ENCODE measurements at regions of chr17 and their contacts with region 1.

Region 1: GRCh38 chr17:6927290-6928126 is 68.3 kb upstream of the ALOX12 start:
- DNase-seq: peak; percentile 28
- H3K4me3 ChIP-seq: no peak overlapping the region
- H3K27ac ChIP-seq: peak overlapping the region; percentile 34
- H3K4me1 ChIP-seq: peaks cover 14% of the 10 kb centered on the region
- H3K27me3 ChIP-seq: no peaks in the 10 kb centered on the region
- CTCF ChIP-seq: no peak

Region 2: DNA sequence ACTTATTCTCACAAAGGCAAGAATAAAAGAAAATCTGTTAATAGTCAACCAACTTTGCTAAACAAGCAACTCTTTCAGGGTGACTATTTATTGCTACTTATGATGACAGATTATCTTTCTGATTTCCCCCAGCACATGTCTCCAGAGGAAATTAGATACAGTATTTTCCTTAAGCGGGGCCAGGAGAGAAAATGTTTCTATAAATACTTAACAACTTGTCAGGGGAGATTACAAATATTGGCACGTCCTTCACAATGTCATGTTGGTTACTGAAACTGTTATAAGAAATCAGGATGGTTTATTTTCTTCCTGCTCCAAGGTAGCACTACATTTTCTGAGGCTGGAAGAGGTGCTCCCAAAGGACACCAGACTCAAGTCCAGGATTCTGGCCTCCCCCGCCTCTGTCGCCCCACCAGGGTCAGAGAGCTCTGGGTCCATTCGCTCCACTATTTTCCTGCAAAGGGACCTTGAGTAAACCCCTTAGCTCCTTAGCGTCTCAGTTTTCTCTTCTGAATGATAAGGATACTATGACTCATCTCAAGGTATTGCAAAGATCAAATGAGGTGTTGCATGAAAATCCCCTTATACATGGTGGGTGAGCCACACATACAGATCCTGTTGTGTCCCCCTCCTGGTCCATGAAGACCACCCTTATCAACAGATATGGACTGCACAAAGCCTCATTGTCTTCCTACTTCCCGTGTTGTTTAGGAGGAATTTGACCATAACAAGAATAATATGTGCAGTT is 1062.4 kb before region 1 on chr17:
- CTCF ChIA-PET with region 1: no interaction called
- POLR2A ChIA-PET with region 1: no interaction called
- intact Hi-C with region 1: no loop called
- DNase-seq: no peak
- H3K4me3 ChIP-seq: no peak overlapping the region
- H3K27ac ChIP-seq: no peak overlapping the region
- H3K4me1 ChIP-seq: no peaks in the 10 kb centered on the region
- H3K27me3 ChIP-seq: peaks cover 28% of the 10 kb centered on the region
- CTCF ChIP-seq: no peak

Region 3: DNA sequence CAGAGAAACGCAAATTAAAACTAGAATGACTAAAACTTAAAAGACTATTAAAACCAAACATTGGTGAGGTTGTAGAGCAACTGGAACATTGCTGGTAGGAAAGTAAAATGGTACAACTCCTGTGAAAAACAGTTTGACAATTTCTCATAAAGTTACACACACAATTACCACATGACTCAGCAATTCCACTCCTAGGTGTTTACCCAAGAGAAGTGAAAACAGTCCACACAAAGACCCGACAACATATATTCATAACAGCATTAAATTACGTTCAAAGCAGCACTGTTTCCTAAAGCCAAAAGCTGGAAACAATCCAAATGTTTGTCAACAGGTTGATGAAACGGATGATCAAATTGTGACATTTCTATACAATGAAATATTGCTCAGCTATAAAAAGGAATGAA is 41.8 kb after region 1 on chr17:
- CTCF ChIA-PET with region 1: no interaction called
- POLR2A ChIA-PET with region 1: interaction called, 11 read pairs
- intact Hi-C with region 1: no loop called
- DNase-seq: no peak
- H3K4me3 ChIP-seq: no peak overlapping the region
- H3K27ac ChIP-seq: no peak overlapping the region
- H3K4me1 ChIP-seq: no peaks in the 10 kb centered on the region
- H3K27me3 ChIP-seq: no peaks in the 10 kb centered on the region
- CTCF ChIP-seq: no peak

Region 4: DNA sequence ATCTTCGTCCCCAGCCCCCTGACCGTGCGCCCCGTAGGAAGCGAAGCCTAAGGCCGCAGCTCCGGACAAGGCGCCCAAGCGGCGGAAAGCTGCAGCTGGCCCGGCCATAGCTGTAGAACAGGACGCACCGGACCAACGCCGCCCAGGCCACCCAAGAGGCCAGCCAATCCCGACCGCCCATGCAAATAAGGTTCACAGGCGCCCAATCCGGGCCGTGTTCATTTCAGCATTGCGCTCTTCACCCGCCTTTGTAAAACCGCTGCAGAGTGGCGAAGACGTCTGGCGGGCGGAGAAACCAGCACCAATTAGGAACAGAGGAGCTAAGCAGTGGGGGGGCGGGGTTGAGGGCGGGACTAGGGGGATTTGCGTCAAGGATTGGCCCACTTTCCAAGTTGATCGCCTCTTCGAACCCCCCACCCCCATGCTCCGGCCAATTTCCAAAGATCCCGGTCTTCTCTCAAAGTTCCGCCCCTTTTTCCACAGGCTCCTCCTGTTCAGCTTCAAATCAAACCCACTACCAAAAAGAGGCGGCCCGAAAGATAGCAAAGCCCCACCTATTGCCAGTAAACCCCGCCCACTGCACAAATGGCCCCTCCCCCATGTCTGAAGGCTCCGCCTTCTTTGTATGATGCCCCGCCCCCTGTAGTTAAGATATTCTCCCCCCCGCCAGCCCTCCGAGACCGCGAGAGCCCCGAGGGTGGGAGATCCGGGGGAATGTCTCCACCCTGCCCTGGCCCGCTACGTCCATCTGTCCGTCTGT is 476.6 kb after region 1 on chr17 and contains the start of gene TMEM256:
- CTCF ChIA-PET with region 1: no interaction called
- POLR2A ChIA-PET with region 1: no interaction called
- intact Hi-C with region 1: no loop called
- DNase-seq: peak; percentile 100
- H3K4me3 ChIP-seq: peak within 1 kb of the TSS; percentile 61
- H3K27ac ChIP-seq: peak within 1 kb of the TSS; percentile 87
- H3K4me1 ChIP-seq: peaks cover 17% of the 10 kb centered on the region
- H3K27me3 ChIP-seq: no peaks in the 10 kb centered on the region
- CTCF ChIP-seq: no peak
- total RNA-seq, gene TMEM256: 57.6 and 91.6 TPM in 2 replicates

Measured in A673 (cell line).